Left ventricle myocardium superior (tissue), 1 donor: ENCODE measurements at regions of chr17 and their contacts with region 1.

Region 1: GRCh38 chr17:39144416-39144840 is 7.0 kb downstream of the PLXDC1 start:
- DNase-seq: peak; percentile 93
- ATAC-seq: peak; percentile 89

Region 2: GRCh38 chr17:39099663-39100286 is 44.7 kb before region 1 on chr17:
- intact Hi-C with region 1: loop called (anchors 10 kb)
- DNase-seq: peak; percentile 61
- ATAC-seq: peak; percentile 68